ENCODE measurements at regions of chr11 and their contacts with region 1.

Region 1: GRCh38 chr11:12149672-12150225 is 39.4 kb downstream of the MICAL2 start:
- DNase-seq: peak; percentile 80
- H3K4me3 Mint-ChIP-seq: peak overlapping the region; percentile 58
- H3K27ac Mint-ChIP-seq: peak overlapping the region; percentile 98
- H3K4me1 Mint-ChIP-seq: peaks cover 76% of the 10 kb centered on the region
- H3K27me3 Mint-ChIP-seq: no peaks in the 10 kb centered on the region

Region 2: GRCh38 chr11:12066799-12067508 is 82.8 kb before region 1 on chr11:
- intact Hi-C with region 1: no loop called
- DNase-seq: no peak
- H3K4me3 Mint-ChIP-seq: no peak overlapping the region
- H3K27ac Mint-ChIP-seq: no peak overlapping the region
- H3K4me1 Mint-ChIP-seq: peaks cover 15% of the 10 kb centered on the region
- H3K27me3 Mint-ChIP-seq: peaks cover 6% of the 10 kb centered on the region

Region 3: GRCh38 chr11:12087075-12088004 is 62.4 kb before region 1 on chr11:
- intact Hi-C with region 1: loop called (anchors 2 kb)
- DNase-seq: peak; percentile 88
- H3K4me3 Mint-ChIP-seq: peak overlapping the region; percentile 40
- H3K27ac Mint-ChIP-seq: peak overlapping the region; percentile 75
- H3K4me1 Mint-ChIP-seq: peaks cover 61% of the 10 kb centered on the region
- H3K27me3 Mint-ChIP-seq: no peaks in the 10 kb centered on the region

Region 4: DNA sequence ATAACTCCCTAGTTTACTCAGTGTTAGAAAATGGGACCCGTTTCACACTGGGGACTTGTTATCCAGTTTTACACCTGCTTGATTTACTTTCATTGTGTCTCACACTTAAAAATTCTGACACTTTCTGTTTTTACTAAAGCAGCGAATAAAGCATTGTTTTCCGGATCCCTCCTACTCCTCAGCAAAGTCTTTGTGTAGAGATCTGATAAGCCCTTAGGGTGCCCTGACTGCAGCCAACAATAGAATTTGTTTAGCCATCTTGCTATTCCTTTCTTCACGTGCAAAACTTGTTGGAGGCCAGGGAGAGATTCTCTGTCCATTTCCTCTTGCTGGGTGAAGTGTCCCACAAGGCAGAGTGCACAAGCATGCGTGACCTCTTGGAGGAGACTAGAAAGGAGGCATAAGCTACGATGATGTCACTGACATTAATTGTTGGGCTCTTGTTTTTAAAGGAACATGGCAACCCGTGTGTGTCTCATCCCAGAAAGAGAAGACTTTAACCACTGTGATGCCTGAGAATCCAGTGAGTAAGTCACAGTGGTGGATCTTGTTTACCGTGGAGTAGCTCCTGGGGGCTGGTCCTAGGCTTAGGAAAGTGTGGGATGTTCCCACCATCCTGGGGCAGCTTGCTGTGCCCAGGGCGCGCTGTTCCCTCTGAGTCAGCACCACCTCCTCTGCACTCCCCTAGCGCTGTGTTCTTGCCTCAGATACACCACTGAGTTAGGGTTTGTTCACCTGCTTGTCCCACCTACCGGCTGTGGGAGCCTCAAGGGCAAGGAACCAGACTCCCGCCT is 11.6 kb before region 1 on chr11:
- intact Hi-C with region 1: loop called (anchors 1 kb)
- DNase-seq: no peak
- H3K4me3 Mint-ChIP-seq: no peak overlapping the region
- H3K27ac Mint-ChIP-seq: peak overlapping the region; percentile 90
- H3K4me1 Mint-ChIP-seq: peaks cover 66% of the 10 kb centered on the region
- H3K27me3 Mint-ChIP-seq: no peaks in the 10 kb centered on the region

Region 5: GRCh38 chr11:12189543-12190235 is 39.9 kb after region 1 on chr11:
- intact Hi-C with region 1: loop called (anchors 1 kb)
- DNase-seq: peak; percentile 73
- H3K4me3 Mint-ChIP-seq: peak overlapping the region; percentile 65
- H3K27ac Mint-ChIP-seq: peak overlapping the region; percentile 91
- H3K4me1 Mint-ChIP-seq: peaks cover 79% of the 10 kb centered on the region
- H3K27me3 Mint-ChIP-seq: no peaks in the 10 kb centered on the region

Region 6: GRCh38 chr11:12235947-12236743 is 86.4 kb after region 1 on chr11:
- intact Hi-C with region 1: loop called (anchors 1 kb)
- DNase-seq: peak; percentile 91
- H3K4me3 Mint-ChIP-seq: peak overlapping the region; percentile 77
- H3K27ac Mint-ChIP-seq: peak overlapping the region; percentile 98
- H3K4me1 Mint-ChIP-seq: peaks cover 54% of the 10 kb centered on the region
- H3K27me3 Mint-ChIP-seq: no peaks in the 10 kb centered on the region

Region 7: GRCh38 chr11:12941671-12942070 is 791.9 kb after region 1 on chr11:
- intact Hi-C with region 1: no loop called
- DNase-seq: no peak
- H3K4me3 Mint-ChIP-seq: no peak overlapping the region
- H3K27ac Mint-ChIP-seq: no peak overlapping the region
- H3K4me1 Mint-ChIP-seq: no peaks in the 10 kb centered on the region
- H3K27me3 Mint-ChIP-seq: peaks cover 8% of the 10 kb centered on the region

Measured in activated CD4-positive, alpha-beta T cell treated with anti-CD3 and anti-CD28 coated beads, Interleukin-2, amount 10 ng/mL, durations not matched to agents 24 days and 14 days (primary cell).